ENCODE measurements at regions of chr5 and their contacts with region 1.

Region 1: DNA sequence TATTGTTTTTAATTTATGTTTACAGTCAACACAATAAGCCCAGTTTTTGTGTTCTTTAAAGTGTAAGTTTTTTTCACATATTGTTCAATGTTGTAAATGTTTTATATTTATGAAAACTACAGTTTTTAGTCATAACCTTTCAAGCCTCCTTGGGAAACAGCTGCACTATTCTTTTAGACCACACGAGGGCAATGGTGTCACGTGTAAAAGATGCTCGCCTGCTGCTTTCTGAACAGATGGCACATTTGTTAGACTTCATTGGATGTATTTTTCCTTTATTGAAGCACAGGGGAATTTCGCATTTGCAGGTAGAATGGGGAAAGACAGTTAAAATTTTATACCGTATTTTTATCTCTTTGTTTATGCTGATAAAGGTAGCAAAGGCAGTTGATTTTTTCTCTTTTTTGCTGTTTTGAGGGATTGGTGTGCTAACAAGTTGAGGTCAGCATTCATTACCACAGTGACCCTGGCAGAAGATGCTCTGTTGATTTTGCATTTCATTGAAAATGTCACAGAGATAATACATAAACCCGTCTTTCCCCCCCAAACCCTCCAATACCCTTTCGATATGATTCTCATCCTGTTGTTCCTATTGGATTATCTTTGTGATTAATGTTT is 59.0 kb downstream of the MAT2B start:
- DNase-seq: peak; percentile 71
- H3K4me3 Mint-ChIP-seq: no peak overlapping the region
- H3K27ac Mint-ChIP-seq: no peak overlapping the region
- H3K4me1 Mint-ChIP-seq: no peaks in the 10 kb centered on the region
- H3K27me3 Mint-ChIP-seq: peaks cover 79% of the 10 kb centered on the region
- CTCF ChIP-seq: peak; percentile 76

Region 2: DNA sequence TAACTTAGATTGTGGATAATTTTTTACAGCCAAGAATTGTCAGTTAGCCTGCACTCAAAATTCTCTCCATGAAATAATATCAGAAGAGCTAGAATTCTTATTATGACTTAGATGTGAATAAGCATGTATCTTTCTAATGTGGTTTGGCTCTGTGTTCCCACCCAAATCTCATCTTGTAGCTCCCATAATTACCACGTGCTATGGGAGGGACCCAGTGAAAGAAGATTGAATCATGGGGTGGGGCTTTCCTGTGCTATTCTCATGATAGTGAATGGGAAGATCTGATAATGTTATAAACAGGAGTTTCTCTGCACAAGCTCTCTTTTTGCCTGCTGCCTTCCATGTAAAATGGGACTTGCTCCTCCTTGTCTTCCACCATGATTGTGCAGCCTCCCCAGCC is 117.8 kb after region 1 on chr5:
- CTCF ChIA-PET with region 1: no interaction called
- intact Hi-C with region 1: no loop called
- DNase-seq: no peak
- H3K4me3 Mint-ChIP-seq: no peak overlapping the region
- H3K27ac Mint-ChIP-seq: no peak overlapping the region
- H3K4me1 Mint-ChIP-seq: no peaks in the 10 kb centered on the region
- H3K27me3 Mint-ChIP-seq: no peaks in the 10 kb centered on the region
- CTCF ChIP-seq: no peak

Region 3: GRCh38 chr5:163770625-163771024 is 206.2 kb after region 1 on chr5:
- CTCF ChIA-PET with region 1: no interaction called
- intact Hi-C with region 1: no loop called
- DNase-seq: no peak
- H3K4me3 Mint-ChIP-seq: no peak overlapping the region
- H3K27ac Mint-ChIP-seq: no peak overlapping the region
- H3K4me1 Mint-ChIP-seq: no peaks in the 10 kb centered on the region
- H3K27me3 Mint-ChIP-seq: peaks cover 31% of the 10 kb centered on the region
- CTCF ChIP-seq: no peak

Region 4: GRCh38 chr5:163915481-163915961 is 351.1 kb after region 1 on chr5:
- CTCF ChIA-PET with region 1: no interaction called
- intact Hi-C with region 1: loop called (anchors 10 kb)
- DNase-seq: peak; percentile 1
- H3K4me3 Mint-ChIP-seq: peak overlapping the region; percentile 13
- H3K27ac Mint-ChIP-seq: no peak overlapping the region
- H3K4me1 Mint-ChIP-seq: peaks cover 6% of the 10 kb centered on the region
- H3K27me3 Mint-ChIP-seq: no peaks in the 10 kb centered on the region
- CTCF ChIP-seq: no peak

Region 5: DNA sequence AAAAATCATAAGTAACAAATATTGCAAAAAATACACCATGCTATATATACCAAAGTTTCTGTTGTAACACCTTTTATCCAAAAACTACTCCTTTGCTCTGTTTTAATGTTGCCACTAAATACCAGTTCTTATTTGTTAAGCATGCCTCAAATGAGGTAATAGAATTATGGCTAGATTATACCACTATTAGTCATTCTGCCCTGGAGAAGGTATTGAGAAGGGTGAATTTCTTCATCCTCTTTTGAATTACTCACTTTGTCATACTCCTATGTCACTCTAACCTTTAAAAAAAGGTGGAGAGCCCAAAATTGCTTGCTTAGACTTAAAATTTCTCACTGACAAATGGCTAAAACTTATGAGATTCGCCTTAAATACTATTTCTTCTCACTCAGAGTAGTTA is 691.9 kb after region 1 on chr5:
- CTCF ChIA-PET with region 1: no interaction called
- intact Hi-C with region 1: loop called (anchors 5 kb)
- DNase-seq: no peak
- H3K4me3 Mint-ChIP-seq: no peak overlapping the region
- H3K27ac Mint-ChIP-seq: no peak overlapping the region
- H3K4me1 Mint-ChIP-seq: peaks cover 12% of the 10 kb centered on the region
- H3K27me3 Mint-ChIP-seq: no peaks in the 10 kb centered on the region
- CTCF ChIP-seq: no peak

Region 6: DNA sequence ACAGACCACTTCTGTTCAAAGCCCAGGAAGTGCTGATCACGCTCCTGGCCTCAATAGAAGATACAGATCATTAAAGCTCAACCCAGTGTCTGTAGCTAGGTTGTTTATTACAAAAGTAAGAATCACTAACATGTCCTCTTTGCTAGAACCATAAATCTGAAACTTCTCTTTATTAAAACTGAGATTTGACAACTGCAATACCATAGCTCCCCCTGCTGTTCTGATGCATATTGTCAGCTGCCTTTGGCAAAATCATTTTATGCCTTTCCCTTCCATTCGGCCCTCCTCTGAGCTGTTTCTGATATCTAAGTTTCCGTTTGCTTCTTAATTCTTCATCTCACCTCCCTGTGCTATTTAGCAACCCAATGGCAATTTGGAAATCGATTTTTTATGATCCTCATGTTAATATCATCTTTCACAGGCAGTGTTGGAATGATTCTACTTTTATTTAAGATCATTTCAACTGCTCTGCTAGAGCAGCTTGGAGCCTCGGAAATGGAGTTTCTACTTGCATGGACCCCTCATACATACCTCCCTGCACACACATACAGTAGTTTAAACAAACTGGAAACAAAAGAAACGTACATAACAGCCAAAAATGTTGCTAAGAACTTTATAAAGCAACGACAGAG is 939.8 kb after region 1 on chr5:
- CTCF ChIA-PET with region 1: interaction called, 3 read pairs
- intact Hi-C with region 1: loop called (anchors 1 kb)
- DNase-seq: peak; percentile 68
- H3K4me3 Mint-ChIP-seq: peak overlapping the region; percentile 3
- H3K27ac Mint-ChIP-seq: no peak overlapping the region
- H3K4me1 Mint-ChIP-seq: peaks cover 9% of the 10 kb centered on the region
- H3K27me3 Mint-ChIP-seq: no peaks in the 10 kb centered on the region
- CTCF ChIP-seq: peak; percentile 77

Region 7: GRCh38 chr5:165209086-165209727 is 1644.8 kb after region 1 on chr5:
- CTCF ChIA-PET with region 1: no interaction called
- intact Hi-C with region 1: loop called (anchors 10 kb)
- DNase-seq: peak; percentile 6
- H3K4me3 Mint-ChIP-seq: no peak overlapping the region
- H3K27ac Mint-ChIP-seq: no peak overlapping the region
- H3K4me1 Mint-ChIP-seq: peaks cover 8% of the 10 kb centered on the region
- H3K27me3 Mint-ChIP-seq: no peaks in the 10 kb centered on the region
- CTCF ChIP-seq: peak; percentile 56

Measured in Calu3 (cell line).